HepG2 (cell line): ENCODE measurements at regions of chr12 and their contacts with region 1.

Region 1: GRCh38 chr12:107884769-107885694 is 110.5 kb downstream of the ASCL4 start:
- DNase-seq: peak; percentile 58
- ATAC-seq: peak; percentile 92
- H3K4me3 ChIP-seq: no peak overlapping the region
- H3K27ac ChIP-seq: no peak overlapping the region
- H3K4me1 ChIP-seq: no peaks in the 10 kb centered on the region
- H3K27me3 ChIP-seq: peaks cover 0 to 7% of the 10 kb centered on the region in 2 experiments; a peak in 2 of 5 replicates
- CTCF ChIP-seq: peak; percentile 86
- EP300 ChIP-seq: no peak
- POLR2A ChIP-seq: no peak
- RAD21 ChIP-seq: peak; percentile 79

Region 2: DNA sequence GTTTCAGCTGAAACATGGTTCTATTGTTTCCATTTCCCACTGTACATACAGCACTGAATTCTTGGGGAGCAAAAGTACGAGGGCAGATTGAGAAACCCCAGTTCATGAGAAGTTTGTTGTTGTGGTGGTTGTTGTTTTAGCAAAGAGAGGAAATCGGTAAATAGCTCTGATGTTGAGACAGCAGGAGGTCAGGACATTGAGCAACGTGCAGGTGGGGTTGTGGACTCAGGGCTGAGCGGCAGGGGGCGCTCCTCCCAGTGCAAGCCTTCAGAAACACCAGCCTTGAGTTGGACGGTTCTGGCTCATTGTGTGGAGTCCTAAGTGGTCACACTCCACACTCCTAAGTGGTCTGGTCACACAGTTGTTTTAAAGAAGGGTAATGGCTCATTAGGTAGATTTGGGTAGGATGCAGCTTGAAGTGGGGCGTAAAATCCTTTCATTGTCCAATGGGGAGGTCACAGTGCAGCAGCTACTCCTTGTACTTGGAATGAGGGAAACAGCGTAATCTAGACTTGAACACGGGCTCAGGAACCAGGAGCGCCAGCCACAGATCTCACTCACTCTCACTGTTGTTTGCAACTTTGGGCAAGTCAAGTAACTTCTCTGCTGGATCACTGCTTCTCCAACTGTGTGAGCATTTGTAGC is 213.9 kb before region 1 on chr12:
- CTCF ChIA-PET with region 1: interaction called, 16 read pairs
- POLR2A ChIA-PET with region 1: no interaction called
- in situ Hi-C with region 1: loop called (anchors 5 kb)
- intact Hi-C with region 1: loop called (anchors 1 kb)
- DNase-seq: peak; percentile 33
- ATAC-seq: peak; percentile 90
- H3K4me3 ChIP-seq: peak overlapping the region in 1 of 3 experiments; percentile 9; a peak in 1 of 6 replicates
- H3K27ac ChIP-seq: no peak overlapping the region
- H3K4me1 ChIP-seq: peaks cover 15% of the 10 kb centered on the region
- H3K27me3 ChIP-seq: peaks cover 1 to 22% of the 10 kb centered on the region in 2 experiments; a peak in 4 of 5 replicates
- CTCF ChIP-seq: peak; percentile 87
- EP300 ChIP-seq: no peak
- POLR2A ChIP-seq: no peak
- RAD21 ChIP-seq: 0 out of 2 replicates have a peak, but pooled peaks have one; percentile 16

Region 3: DNA sequence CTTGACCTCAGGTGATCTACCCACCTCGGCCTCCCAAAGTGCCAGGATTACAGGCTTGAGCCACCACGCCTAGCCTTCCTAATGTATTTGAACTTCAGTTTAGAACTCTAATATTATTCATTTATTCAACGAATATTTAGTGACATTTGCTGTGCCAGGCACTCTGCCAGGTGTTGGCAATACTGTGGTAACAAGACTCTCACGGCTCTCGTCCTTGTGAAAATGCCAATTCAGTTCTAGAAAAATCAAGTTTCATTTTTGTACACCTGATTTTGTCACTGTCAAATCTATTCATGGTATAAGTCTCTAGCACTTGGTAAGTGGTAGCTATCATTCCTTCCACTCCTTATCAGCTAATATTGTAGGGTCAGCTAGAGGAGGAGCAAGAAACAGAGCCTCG is 205.7 kb before region 1 on chr12:
- CTCF ChIA-PET with region 1: interaction called, 16 read pairs
- POLR2A ChIA-PET with region 1: interaction called, 4 read pairs
- in situ Hi-C with region 1: loop called (anchors 5 kb)
- intact Hi-C with region 1: loop called (anchors 1 kb)
- DNase-seq: no peak
- ATAC-seq: no peak
- H3K4me3 ChIP-seq: no peak overlapping the region
- H3K27ac ChIP-seq: no peak overlapping the region
- H3K4me1 ChIP-seq: peaks cover 40% of the 10 kb centered on the region
- H3K27me3 ChIP-seq: peaks cover 0 to 27% of the 10 kb centered on the region in 2 experiments; a peak in 3 of 5 replicates
- CTCF ChIP-seq: no peak
- EP300 ChIP-seq: no peak
- POLR2A ChIP-seq: no peak
- RAD21 ChIP-seq: no peak

Region 4: DNA sequence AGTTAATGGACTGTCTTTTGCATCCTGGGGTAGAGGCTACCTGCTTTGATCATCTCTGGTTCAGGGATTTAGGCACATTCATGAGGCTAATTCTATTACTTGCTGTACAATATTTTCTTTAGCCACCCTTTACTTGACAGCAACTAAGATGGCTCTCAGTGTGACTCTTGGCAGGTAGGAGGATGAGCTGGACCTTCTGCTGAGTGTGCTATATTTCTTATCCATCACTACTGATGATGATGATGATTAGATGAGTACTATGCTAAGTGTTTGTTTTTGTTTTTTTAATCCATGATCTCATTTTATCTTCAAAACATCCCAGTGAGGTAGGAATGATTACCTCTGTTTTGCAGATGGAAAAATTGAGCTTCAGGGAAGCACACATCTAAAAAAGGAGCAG is 91.3 kb after region 1 on chr12:
- CTCF ChIA-PET with region 1: no interaction called
- POLR2A ChIA-PET with region 1: no interaction called
- in situ Hi-C with region 1: no loop called
- intact Hi-C with region 1: no loop called
- DNase-seq: no peak
- ATAC-seq: no peak
- H3K4me3 ChIP-seq: no peak overlapping the region
- H3K27ac ChIP-seq: no peak overlapping the region
- H3K4me1 ChIP-seq: no peaks in the 10 kb centered on the region
- H3K27me3 ChIP-seq: 0 out of 5 replicates have a peak, but pooled peaks cover 0 to 3% of the 10 kb centered on the region in 2 experiments
- CTCF ChIP-seq: no peak
- EP300 ChIP-seq: no peak
- POLR2A ChIP-seq: no peak
- RAD21 ChIP-seq: no peak

Region 5: DNA sequence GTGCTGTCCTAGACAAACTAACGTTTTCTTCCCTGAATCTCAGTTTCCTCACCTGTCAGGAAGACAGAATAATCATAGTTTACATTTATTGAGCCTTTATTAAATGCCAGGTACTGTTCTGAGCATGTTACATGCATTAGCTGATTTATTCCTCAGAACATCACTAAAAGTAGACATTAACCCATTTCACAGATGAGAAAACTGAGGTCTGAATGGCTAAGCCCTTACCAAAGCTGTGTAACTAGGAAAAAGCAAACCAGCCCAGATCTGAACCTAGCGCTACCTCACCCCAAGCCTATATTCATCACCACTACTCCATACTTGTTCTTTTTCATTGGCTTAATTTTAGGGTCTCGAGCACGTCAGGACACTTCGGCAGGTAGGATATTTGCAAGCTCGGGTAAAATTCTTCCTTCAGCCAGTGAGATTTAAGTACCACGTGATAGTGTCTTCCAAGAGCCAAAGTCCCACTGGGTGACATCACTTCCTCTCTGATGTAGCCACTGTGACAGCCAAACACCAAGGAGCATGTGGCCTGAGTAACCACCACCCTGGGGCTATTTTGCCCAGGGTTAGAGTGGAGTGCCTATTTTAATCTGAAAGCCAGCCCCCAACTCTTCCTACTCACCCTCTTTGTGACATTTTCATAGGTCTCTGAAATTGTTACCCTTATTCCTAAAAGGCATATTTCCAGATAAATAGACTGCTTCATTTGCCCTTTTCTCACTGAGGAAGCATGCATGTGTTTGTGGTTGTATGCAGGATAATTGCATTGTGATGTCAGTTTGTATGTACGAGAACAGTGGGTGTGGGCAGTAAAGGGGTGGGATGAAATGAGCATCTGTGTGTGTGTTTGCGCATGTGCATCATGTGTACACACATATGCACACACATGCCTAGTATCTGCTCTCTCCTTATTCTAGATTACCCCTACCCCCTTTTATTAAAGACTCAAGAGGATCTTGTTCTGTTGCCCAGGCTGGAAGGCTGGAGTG is 181.8 kb after region 1 on chr12:
- CTCF ChIA-PET with region 1: no interaction called
- POLR2A ChIA-PET with region 1: no interaction called
- in situ Hi-C with region 1: no loop called
- intact Hi-C with region 1: no loop called
- DNase-seq: peak; percentile 4
- ATAC-seq: no peak
- H3K4me3 ChIP-seq: no peak overlapping the region
- H3K27ac ChIP-seq: no peak overlapping the region
- H3K4me1 ChIP-seq: 0 out of 2 replicates have a peak, but pooled peaks cover 5% of the 10 kb centered on the region
- H3K27me3 ChIP-seq: no peaks in the 10 kb centered on the region; a peak in 1 of 5 replicates
- CTCF ChIP-seq: no peak
- EP300 ChIP-seq: no peak
- POLR2A ChIP-seq: no peak
- RAD21 ChIP-seq: no peak